WTC11 (cell line): ENCODE measurements at regions of chr7 and their contacts with region 1.

Region 1: GRCh38 chr7:121994625-121995410 is 121.9 kb downstream of the PTPRZ1 start:
- DNase-seq: peak; percentile 71
- ATAC-seq: peak; percentile 75
- H3K4me3 Mint-ChIP-seq: no peak overlapping the region
- H3K27ac Mint-ChIP-seq: peak overlapping the region; percentile 41; the same call in 1 of the 2 replicates
- H3K4me1 Mint-ChIP-seq: peaks cover 12% of the 10 kb centered on the region
- H3K27me3 Mint-ChIP-seq: no peaks in the 10 kb centered on the region
- CTCF ChIP-seq: peak; percentile 78

Region 2: DNA sequence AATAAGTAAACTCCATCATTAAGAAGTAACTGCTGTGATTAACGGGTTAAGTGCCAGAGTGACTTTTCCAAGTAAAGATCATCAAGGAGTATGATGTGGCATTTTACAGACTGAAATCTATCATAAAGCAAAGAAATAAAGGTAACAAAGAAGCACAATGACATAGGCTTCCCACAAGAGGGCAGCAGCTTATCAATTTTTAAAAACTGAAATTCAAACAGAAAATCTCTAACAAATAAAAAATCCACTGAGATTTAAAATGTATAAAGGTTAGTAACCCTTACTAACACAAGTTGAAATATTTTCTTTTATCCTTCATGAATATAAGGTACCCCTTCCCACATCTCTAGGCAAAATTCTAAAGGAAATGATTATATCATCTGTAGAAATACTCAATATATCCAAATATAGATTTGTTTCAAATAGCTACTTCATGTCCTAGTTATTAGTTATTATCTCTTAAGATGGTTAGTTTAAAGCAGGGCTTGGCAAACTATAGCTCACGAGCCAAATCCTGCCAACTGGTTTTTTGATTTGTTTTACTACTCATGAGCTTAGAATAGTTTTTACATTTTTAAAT is 627.9 kb before region 1 on chr7:
- CTCF ChIA-PET with region 1: interaction called, 18 read pairs
- POLR2A ChIA-PET with region 1: no interaction called
- DNase-seq: no peak
- ATAC-seq: no peak
- H3K4me3 Mint-ChIP-seq: no peak overlapping the region
- H3K27ac Mint-ChIP-seq: no peak overlapping the region
- H3K4me1 Mint-ChIP-seq: peaks cover 14% of the 10 kb centered on the region
- H3K27me3 Mint-ChIP-seq: no peaks in the 10 kb centered on the region
- CTCF ChIP-seq: peak; percentile 51; the same call in 1 of the 2 replicates

Region 3: GRCh38 chr7:121605317-121605680 is 389.5 kb before region 1 on chr7:
- CTCF ChIA-PET with region 1: interaction called, 19 read pairs
- POLR2A ChIA-PET with region 1: no interaction called
- DNase-seq: no peak
- ATAC-seq: no peak
- H3K4me3 Mint-ChIP-seq: no peak overlapping the region
- H3K27ac Mint-ChIP-seq: no peak overlapping the region
- H3K4me1 Mint-ChIP-seq: peaks cover 28% of the 10 kb centered on the region
- H3K27me3 Mint-ChIP-seq: no peaks in the 10 kb centered on the region
- CTCF ChIP-seq: no peak

Region 4: DNA sequence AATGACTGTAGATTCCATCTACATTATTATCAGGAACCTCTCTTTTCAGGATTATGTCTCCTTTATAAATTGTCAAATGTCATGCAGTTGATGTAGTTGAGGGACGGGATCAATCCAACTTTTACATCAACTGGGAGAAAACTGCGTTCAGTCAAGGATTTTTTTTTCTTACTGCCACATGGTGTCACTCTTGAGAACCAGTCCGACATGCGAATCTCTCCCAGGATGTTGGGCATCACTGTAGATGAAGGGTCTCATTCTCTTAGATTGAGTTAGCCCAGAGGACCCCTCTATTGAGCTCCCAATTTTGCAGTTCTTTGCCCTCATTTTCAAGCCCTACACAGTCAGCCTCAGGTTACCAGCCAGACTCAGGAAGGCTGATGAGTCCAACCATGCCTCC is 242.1 kb before region 1 on chr7:
- CTCF ChIA-PET with region 1: interaction called, 21 read pairs
- POLR2A ChIA-PET with region 1: no interaction called
- DNase-seq: no peak
- ATAC-seq: peak; percentile 83
- H3K4me3 Mint-ChIP-seq: no peak overlapping the region
- H3K27ac Mint-ChIP-seq: no peak overlapping the region
- H3K4me1 Mint-ChIP-seq: peaks cover 23% of the 10 kb centered on the region
- H3K27me3 Mint-ChIP-seq: no peaks in the 10 kb centered on the region
- CTCF ChIP-seq: no peak

Region 5: DNA sequence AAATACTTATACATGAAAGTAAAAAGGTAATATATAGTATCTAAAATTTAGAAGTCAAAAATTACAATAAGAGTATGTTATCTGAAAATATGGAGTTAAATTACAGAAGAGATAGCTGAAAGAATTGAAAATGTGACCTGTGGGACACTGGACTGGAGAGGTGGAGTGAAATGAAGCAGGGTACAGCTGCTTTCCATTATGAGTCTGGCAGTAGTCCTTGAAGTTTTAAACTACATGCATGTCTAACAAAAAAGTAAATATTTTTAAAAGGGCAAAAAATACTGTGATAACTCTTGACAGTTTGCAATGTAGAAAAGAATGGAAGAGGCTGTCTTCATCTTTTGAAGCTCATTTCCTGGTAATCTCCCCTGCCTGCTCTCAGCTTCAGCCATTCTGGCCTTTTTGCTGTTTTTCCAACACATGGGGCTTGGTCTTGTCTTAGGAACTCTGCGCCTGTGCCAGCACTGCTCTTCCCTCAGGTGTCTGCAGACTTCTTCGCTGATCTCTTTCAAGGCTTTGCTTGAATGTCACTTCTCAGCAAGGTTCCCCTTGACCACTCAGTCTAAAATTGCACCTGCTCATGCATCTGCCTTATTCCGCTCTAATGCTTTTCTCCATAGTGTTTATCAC is 85.0 kb before region 1 on chr7:
- CTCF ChIA-PET with region 1: interaction called, 19 read pairs
- POLR2A ChIA-PET with region 1: no interaction called
- DNase-seq: no peak
- ATAC-seq: peak; percentile 71
- H3K4me3 Mint-ChIP-seq: no peak overlapping the region
- H3K27ac Mint-ChIP-seq: peak overlapping the region; percentile 82
- H3K4me1 Mint-ChIP-seq: peaks cover 54% of the 10 kb centered on the region
- H3K27me3 Mint-ChIP-seq: no peaks in the 10 kb centered on the region
- CTCF ChIP-seq: no peak

Region 6: GRCh38 chr7:121936951-121937623 is 57.7 kb before region 1 on chr7:
- CTCF ChIA-PET with region 1: interaction called, 12 read pairs
- POLR2A ChIA-PET with region 1: no interaction called
- DNase-seq: peak; percentile 33
- ATAC-seq: peak; percentile 56
- H3K4me3 Mint-ChIP-seq: no peak overlapping the region; the same call in 1 of the 2 replicates
- H3K27ac Mint-ChIP-seq: peak overlapping the region; percentile 99
- H3K4me1 Mint-ChIP-seq: peaks cover 92% of the 10 kb centered on the region
- H3K27me3 Mint-ChIP-seq: no peaks in the 10 kb centered on the region
- CTCF ChIP-seq: no peak

Region 7: DNA sequence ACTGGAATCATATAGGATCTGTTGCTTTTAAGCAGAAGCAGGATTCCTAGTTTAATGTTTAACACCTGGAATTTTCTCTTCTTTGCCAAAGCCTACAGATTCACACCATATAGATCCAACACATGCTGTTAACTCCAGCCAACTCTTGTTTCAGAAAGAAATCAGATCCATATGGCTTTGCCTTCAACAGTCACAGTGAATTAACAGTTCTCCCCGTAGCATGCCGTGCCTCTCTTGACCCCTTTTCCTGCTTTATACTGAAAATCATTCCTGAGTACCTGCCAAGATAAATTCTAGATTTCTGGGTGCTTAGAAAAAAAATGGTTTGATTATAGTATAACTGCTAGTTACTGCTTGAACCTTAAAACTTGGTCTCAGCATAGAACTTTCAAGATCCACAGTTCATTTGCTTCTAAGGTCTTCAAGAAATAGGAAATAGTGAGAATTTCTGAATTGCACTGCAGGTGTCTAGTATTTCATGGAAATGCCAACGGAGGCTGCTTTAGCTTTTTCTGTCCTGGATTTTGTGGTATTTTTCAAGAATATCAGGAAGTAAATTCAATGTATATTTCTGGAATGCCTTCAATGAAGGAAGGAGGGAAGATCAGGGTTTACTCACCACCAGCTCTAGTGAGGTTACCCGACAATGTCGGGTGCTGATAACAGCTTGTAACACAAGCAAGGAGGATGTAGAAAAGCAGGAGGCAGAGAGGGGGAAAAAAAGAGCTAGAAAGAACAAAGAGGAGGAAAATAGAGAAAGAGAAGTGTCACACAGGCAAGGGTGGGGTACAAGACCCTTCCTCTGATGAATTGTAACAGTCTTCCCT is 142.6 kb after region 1 on chr7:
- CTCF ChIA-PET with region 1: no interaction called
- POLR2A ChIA-PET with region 1: no interaction called
- DNase-seq: no peak
- ATAC-seq: peak; percentile 10; the same call in 1 of the 2 replicates
- H3K4me3 Mint-ChIP-seq: peak overlapping the region; percentile 58
- H3K27ac Mint-ChIP-seq: peak overlapping the region; percentile 93
- H3K4me1 Mint-ChIP-seq: peaks cover 60% of the 10 kb centered on the region
- H3K27me3 Mint-ChIP-seq: no peaks in the 10 kb centered on the region
- CTCF ChIP-seq: no peak

Region 8: DNA sequence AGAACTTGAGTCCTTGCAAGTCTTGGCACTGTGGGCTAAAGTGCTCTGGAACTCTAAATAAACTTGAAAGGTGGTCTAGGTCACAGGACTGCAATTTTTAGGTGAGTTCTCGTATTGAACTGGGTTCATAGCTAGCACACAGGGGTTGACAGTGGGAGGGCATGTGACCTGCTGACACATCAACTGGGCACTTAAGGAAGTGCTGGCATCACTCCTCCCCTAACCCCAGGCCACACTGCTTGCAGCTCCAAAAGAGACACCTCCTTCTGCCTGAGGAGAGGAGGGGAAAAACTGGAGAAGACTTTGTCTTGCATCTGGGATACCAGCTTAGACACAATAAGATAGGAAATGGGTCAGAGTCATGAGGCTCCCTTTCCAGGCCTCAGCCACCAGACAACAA is 187.3 kb after region 1 on chr7:
- CTCF ChIA-PET with region 1: no interaction called
- POLR2A ChIA-PET with region 1: no interaction called
- DNase-seq: no peak
- ATAC-seq: peak; percentile 52
- H3K4me3 Mint-ChIP-seq: no peak overlapping the region
- H3K27ac Mint-ChIP-seq: no peak overlapping the region
- H3K4me1 Mint-ChIP-seq: no peaks in the 10 kb centered on the region
- H3K27me3 Mint-ChIP-seq: no peaks in the 10 kb centered on the region
- CTCF ChIP-seq: no peak